ENCODE measurements at regions of chr2 and their contacts with region 1.

Region 1: DNA sequence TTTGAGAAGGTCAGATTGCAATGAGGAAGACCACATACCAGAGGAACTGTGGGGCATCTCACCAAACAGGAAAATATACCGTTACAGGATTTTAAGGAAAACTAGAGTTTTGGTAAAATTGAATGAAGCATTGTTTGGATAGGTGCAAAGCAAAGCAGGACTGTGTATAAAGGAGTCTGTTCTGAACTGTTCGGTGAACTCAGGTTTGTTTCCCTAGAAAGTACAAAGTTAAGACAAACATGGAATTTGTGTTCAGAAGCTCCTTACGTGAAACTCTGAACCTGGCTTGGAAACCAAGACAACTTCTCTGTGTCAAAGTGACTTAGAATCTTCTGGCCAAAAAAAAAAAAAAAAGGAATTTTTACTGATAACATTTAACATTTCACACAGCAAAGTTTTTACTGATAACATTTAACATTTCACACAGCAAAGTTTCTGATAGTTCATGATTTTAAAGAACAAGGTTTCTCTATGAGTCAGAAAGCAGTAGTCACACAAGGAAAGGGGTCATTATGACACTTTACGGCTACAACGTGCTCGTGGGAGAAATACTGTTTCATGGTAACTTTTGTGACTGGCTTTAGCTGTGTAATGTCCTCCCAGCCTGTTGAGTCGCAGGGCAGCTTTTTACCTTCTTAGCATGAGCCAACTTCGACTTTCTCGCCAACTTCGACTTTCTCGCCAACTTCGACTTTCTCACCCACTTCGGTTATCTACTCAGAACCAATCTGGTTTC is 21.2 kb upstream of the TET3 start:
- DNase-seq: no peak
- H3K4me3 Mint-ChIP-seq: peak overlapping the region; percentile 1
- H3K27ac Mint-ChIP-seq: peak overlapping the region; percentile 86
- H3K4me1 Mint-ChIP-seq: peaks cover 30% of the 10 kb centered on the region
- H3K27me3 Mint-ChIP-seq: no peaks in the 10 kb centered on the region

Region 2: GRCh38 chr2:73730810-73731209 is 232.7 kb before region 1 on chr2:
- intact Hi-C with region 1: no loop called
- DNase-seq: no peak
- H3K4me3 Mint-ChIP-seq: no peak overlapping the region
- H3K27ac Mint-ChIP-seq: no peak overlapping the region
- H3K4me1 Mint-ChIP-seq: no peaks in the 10 kb centered on the region
- H3K27me3 Mint-ChIP-seq: no peaks in the 10 kb centered on the region

Region 3: GRCh38 chr2:73886357-73886756 is 77.2 kb before region 1 on chr2:
- intact Hi-C with region 1: loop called (anchors 2 kb)
- DNase-seq: no peak
- H3K4me3 Mint-ChIP-seq: peak overlapping the region; percentile 63
- H3K27ac Mint-ChIP-seq: peak overlapping the region; percentile 84
- H3K4me1 Mint-ChIP-seq: peaks cover 29% of the 10 kb centered on the region
- H3K27me3 Mint-ChIP-seq: peaks cover 4% of the 10 kb centered on the region

Region 4: DNA sequence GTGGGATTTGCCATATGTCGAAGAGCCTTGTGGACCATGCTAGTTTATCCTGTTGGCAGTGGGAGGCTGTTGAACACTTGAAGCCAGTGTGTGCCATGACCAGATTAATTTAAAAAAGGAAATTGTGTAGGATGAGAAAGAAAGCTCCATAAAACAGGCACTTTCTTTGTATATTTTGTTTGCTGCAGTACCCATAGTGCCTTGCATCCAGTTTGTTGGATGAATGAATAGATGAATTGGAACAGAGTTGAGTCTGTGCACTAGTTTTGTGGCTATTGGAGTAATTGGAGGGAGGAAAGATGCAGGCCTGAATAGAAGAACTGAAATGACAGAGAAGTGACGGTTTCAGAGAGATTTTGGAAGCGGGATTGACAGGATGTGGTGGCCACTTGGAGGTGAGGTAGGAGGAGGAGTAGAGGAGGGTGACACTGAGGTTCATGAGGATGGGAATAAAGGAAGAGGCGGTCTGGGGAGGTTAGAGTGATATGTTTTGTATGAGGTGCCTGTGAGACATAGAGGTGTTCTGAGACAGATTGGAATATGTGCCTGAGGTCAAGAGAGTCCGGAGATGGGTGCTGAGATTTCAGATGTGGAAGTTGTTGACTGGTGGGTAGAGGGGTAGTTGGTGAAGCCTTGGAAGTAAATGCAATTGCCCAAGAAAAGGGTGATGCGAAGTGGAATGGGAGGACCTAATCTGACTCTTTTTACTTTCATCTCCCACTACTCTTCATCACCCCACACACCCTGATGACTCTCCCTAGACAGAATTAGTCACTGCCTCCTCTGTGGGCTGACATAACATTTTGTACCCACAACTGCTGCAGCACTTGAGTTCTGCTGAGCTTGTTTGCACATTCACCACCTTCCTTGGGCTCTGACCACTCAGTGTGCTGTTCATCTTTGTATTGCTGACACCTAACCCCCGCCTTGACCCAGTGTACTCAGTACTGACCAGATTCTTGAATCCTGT is 31.7 kb before region 1 on chr2:
- intact Hi-C with region 1: loop called (anchors 1 kb)
- DNase-seq: peak; percentile 22
- H3K4me3 Mint-ChIP-seq: peak overlapping the region; percentile 35
- H3K27ac Mint-ChIP-seq: peak overlapping the region; percentile 82
- H3K4me1 Mint-ChIP-seq: peaks cover 63% of the 10 kb centered on the region
- H3K27me3 Mint-ChIP-seq: no peaks in the 10 kb centered on the region

Region 5: GRCh38 chr2:73939419-73939818 is 24.1 kb before region 1 on chr2:
- intact Hi-C with region 1: loop called (anchors 1 kb)
- DNase-seq: no peak
- H3K4me3 Mint-ChIP-seq: no peak overlapping the region
- H3K27ac Mint-ChIP-seq: no peak overlapping the region
- H3K4me1 Mint-ChIP-seq: peaks cover 68% of the 10 kb centered on the region
- H3K27me3 Mint-ChIP-seq: no peaks in the 10 kb centered on the region

Region 6: GRCh38 chr2:73944714-73945113 is 18.8 kb before region 1 on chr2:
- intact Hi-C with region 1: loop called (anchors 1 kb)
- DNase-seq: no peak
- H3K4me3 Mint-ChIP-seq: peak overlapping the region; percentile 2
- H3K27ac Mint-ChIP-seq: peak overlapping the region; percentile 25
- H3K4me1 Mint-ChIP-seq: peaks cover 73% of the 10 kb centered on the region
- H3K27me3 Mint-ChIP-seq: no peaks in the 10 kb centered on the region

Region 7: GRCh38 chr2:73979686-73980085 is 16.1 kb after region 1 on chr2:
- intact Hi-C with region 1: loop called (anchors 2 kb)
- DNase-seq: no peak
- H3K4me3 Mint-ChIP-seq: peak overlapping the region; percentile 56
- H3K27ac Mint-ChIP-seq: peak overlapping the region; percentile 65
- H3K4me1 Mint-ChIP-seq: peaks cover 67% of the 10 kb centered on the region
- H3K27me3 Mint-ChIP-seq: peaks cover 22% of the 10 kb centered on the region

Measured in activated T-helper 1 cell treated with anti-CD3 and anti-CD28 coated beads, Interleukin-12 subunit alpha, Interleukin-12 subunit beta, Interleukin-2, Interleukin-4 antibody, amounts not matched to agents 30 ng/mL and 10 ng/mL and 1 ng/mL, durations not matched to agents 14 hours and 24 hours and 36 hours (primary cell).